Activated CD4-positive, alpha-beta T cell treated with anti-CD3 and anti-CD28 coated beads for 36 hours (primary cell): ENCODE measurements at regions of chr2 and their contacts with region 1.

Region 1: GRCh38 chr2:44361330-44362206 is at the starts of genes CAMKMT and PREPL:
- DNase-seq: peak; percentile 99
- ATAC-seq: peak; percentile 85
- H3K4me3 Mint-ChIP-seq: peak within 1 kb of the TSS; percentile 92
- H3K27ac Mint-ChIP-seq: peak within 1 kb of the TSS; percentile 100
- H3K4me1 Mint-ChIP-seq: peaks cover 48% of the 10 kb centered on the region
- H3K27me3 Mint-ChIP-seq: no peaks in the 10 kb centered on the region
- total RNA-seq, gene CAMKMT: 10.8 to 13.3 TPM
- total RNA-seq, gene PREPL: 31.5 to 38.6 TPM

Region 2: GRCh38 chr2:42360890-42361727 is 2000.5 kb before region 1 on chr2 and contains the start of gene COX7A2L:
- CTCF ChIA-PET with region 1: no interaction called
- POLR2A ChIA-PET with region 1: no interaction called
- intact Hi-C with region 1: loop called in 1 of 2 experiments (anchors 5 kb)
- DNase-seq: peak; percentile 98
- ATAC-seq: peak; percentile 94
- H3K4me3 Mint-ChIP-seq: peak within 1 kb of the TSS; percentile 89
- H3K27ac Mint-ChIP-seq: peak within 1 kb of the TSS; percentile 94
- H3K4me1 Mint-ChIP-seq: peaks cover 40% of the 10 kb centered on the region
- H3K27me3 Mint-ChIP-seq: no peaks in the 10 kb centered on the region
- total RNA-seq, gene COX7A2L: 103 TPM

Region 3: GRCh38 chr2:43348908-43349661 is 1012.5 kb before region 1 on chr2:
- CTCF ChIA-PET with region 1: no interaction called
- POLR2A ChIA-PET with region 1: no interaction called
- intact Hi-C with region 1: no loop called
- DNase-seq: no peak
- ATAC-seq: no peak
- H3K4me3 Mint-ChIP-seq: no peak overlapping the region
- H3K27ac Mint-ChIP-seq: no peak overlapping the region
- H3K4me1 Mint-ChIP-seq: no peaks in the 10 kb centered on the region
- H3K27me3 Mint-ChIP-seq: no peaks in the 10 kb centered on the region

Region 4: GRCh38 chr2:43773876-43774613 is 587.5 kb before region 1 on chr2 and contains the start of gene DYNC2LI1:
- CTCF ChIA-PET with region 1: no interaction called
- POLR2A ChIA-PET with region 1: no interaction called
- intact Hi-C with region 1: loop called in 1 of 2 experiments (anchors 2 kb)
- DNase-seq: peak; percentile 92
- ATAC-seq: peak; percentile 94
- H3K4me3 Mint-ChIP-seq: peak within 1 kb of the TSS; percentile 95
- H3K27ac Mint-ChIP-seq: peak within 1 kb of the TSS; percentile 74
- H3K4me1 Mint-ChIP-seq: peaks cover 29% of the 10 kb centered on the region
- H3K27me3 Mint-ChIP-seq: no peaks in the 10 kb centered on the region
- total RNA-seq, gene DYNC2LI1: 19.5 to 28.4 TPM

Region 5: GRCh38 chr2:44167940-44168680 is 193.5 kb before region 1 on chr2:
- CTCF ChIA-PET with region 1: no interaction called
- POLR2A ChIA-PET with region 1: interaction called, 7 read pairs
- intact Hi-C with region 1: loop called (anchors 1 kb)
- DNase-seq: peak; percentile 98
- ATAC-seq: peak; percentile 81
- H3K4me3 Mint-ChIP-seq: peak overlapping the region; percentile 94
- H3K27ac Mint-ChIP-seq: peak overlapping the region; percentile 94
- H3K4me1 Mint-ChIP-seq: peaks cover 29% of the 10 kb centered on the region
- H3K27me3 Mint-ChIP-seq: no peaks in the 10 kb centered on the region

Region 6: GRCh38 chr2:44392338-44392943 is 30.9 kb after region 1 on chr2:
- CTCF ChIA-PET with region 1: interaction called, 10 read pairs
- POLR2A ChIA-PET with region 1: interaction called, 3 read pairs
- intact Hi-C with region 1: no loop called
- DNase-seq: peak; percentile 69
- ATAC-seq: no peak
- H3K4me3 Mint-ChIP-seq: no peak overlapping the region
- H3K27ac Mint-ChIP-seq: no peak overlapping the region
- H3K4me1 Mint-ChIP-seq: peaks cover 3% of the 10 kb centered on the region
- H3K27me3 Mint-ChIP-seq: no peaks in the 10 kb centered on the region

Region 7: GRCh38 chr2:44560352-44560751 is 198.8 kb after region 1 on chr2:
- CTCF ChIA-PET with region 1: no interaction called
- POLR2A ChIA-PET with region 1: no interaction called
- intact Hi-C with region 1: no loop called
- DNase-seq: peak; percentile 46
- ATAC-seq: no peak
- H3K4me3 Mint-ChIP-seq: no peak overlapping the region
- H3K27ac Mint-ChIP-seq: no peak overlapping the region
- H3K4me1 Mint-ChIP-seq: no peaks in the 10 kb centered on the region
- H3K27me3 Mint-ChIP-seq: no peaks in the 10 kb centered on the region

Region 8: DNA sequence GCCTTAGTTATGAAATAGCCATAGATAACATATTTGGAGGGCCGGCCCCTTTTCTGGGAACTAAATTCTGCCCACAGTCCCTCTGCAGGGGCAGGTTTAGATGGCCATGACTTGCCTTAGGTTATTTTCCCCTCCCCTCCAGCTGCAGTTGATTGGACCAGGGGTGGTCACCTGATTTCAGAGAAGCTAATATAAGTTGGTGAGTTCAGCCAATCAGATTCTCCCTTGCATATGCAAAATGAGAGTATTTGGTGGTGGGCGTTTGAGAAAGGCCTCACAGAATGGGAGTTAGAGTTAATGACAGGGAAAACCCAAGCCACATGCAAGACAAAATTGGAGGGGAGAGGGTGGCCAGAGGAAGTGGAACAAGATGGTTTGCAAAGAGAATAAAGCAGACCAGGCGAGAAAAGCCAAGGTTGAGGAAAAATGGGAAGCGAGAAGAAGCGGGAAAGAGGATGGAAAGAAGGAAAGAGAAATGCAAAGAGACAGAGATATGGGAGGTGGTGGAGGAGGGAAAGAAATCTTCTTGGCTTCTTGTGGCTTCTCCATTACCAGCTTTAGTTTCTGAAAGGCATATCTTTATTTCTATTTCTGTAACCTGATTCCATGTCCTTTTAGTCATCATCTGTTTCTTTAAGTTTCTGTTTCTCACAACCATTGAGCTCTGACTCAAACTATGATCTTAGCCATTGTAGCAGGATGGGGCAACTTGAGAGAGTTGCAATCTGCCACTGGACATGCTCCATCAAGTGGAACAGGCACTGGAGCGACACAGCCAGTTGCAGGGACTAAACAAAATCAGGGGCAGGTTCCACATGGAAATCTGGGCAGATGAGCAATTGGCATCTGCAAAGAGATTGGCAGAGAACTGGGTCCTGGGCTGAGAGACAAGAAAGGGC is 471.9 kb after region 1 on chr2:
- CTCF ChIA-PET with region 1: no interaction called
- POLR2A ChIA-PET with region 1: no interaction called
- intact Hi-C with region 1: loop called in 1 of 2 experiments (anchors 10 kb)
- DNase-seq: peak; percentile 21
- ATAC-seq: peak; percentile 24
- H3K4me3 Mint-ChIP-seq: no peak overlapping the region
- H3K27ac Mint-ChIP-seq: peak overlapping the region; percentile 78
- H3K4me1 Mint-ChIP-seq: peaks cover 31% of the 10 kb centered on the region
- H3K27me3 Mint-ChIP-seq: peaks cover 11% of the 10 kb centered on the region

Region 9: GRCh38 chr2:45000921-45001868 is 639.6 kb after region 1 on chr2:
- CTCF ChIA-PET with region 1: no interaction called
- POLR2A ChIA-PET with region 1: no interaction called
- intact Hi-C with region 1: no loop called
- DNase-seq: peak; percentile 27
- ATAC-seq: no peak
- H3K4me3 Mint-ChIP-seq: peak overlapping the region; percentile 47
- H3K27ac Mint-ChIP-seq: no peak overlapping the region
- H3K4me1 Mint-ChIP-seq: peaks cover 20% of the 10 kb centered on the region
- H3K27me3 Mint-ChIP-seq: peaks cover 75% of the 10 kb centered on the region

Region 10: GRCh38 chr2:45611020-45611737 is 1249.6 kb after region 1 on chr2 and contains the start of gene SRBD1:
- CTCF ChIA-PET with region 1: no interaction called
- POLR2A ChIA-PET with region 1: no interaction called
- intact Hi-C with region 1: loop called in 1 of 2 experiments (anchors 1 kb)
- DNase-seq: peak; percentile 96
- ATAC-seq: peak; percentile 97
- H3K4me3 Mint-ChIP-seq: peak within 1 kb of the TSS; percentile 93
- H3K27ac Mint-ChIP-seq: peak within 1 kb of the TSS; percentile 94
- H3K4me1 Mint-ChIP-seq: peaks cover 19% of the 10 kb centered on the region
- H3K27me3 Mint-ChIP-seq: no peaks in the 10 kb centered on the region
- total RNA-seq, gene SRBD1: 19.2 to 25.0 TPM